Posterior cingulate gyrus (tissue), 11 donors: ENCODE measurements at regions of chr4 and their contacts with region 1.

Region 1: GRCh38 chr4:81351654-81352445 is 119.9 kb downstream of the RASGEF1B start:
- DNase-seq: peak; percentile 59 to 94 (median 78)

Region 2: DNA sequence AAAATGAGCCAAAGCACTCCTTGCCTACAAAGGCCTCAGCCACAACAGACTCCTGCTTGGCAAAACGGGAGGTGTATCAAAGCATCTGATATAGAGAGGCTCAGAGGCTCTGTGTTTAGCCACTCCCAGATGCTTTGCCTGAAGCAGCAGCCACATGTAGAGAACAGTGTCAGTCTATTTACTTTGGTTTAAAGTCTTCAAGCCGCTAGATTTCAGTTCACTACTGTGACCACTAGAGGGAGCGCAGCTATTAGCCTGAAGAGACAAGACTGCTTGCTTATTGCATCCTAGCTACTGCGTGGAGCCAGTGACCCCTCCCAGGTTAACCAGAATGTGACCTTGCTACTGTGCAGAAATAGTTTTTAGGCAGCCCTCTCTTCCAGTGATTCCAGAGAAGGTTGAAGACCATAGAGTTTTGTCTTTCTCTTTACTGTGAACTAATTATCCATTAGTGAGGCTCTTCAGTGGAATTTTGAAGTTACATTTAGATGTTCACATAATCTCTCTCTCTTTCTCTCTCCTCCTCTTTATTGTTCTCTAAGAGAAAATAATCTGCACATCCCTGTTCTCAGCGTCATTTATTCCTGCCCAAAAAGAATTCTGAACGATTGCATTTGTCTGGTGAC is 282.0 kb before region 1 on chr4:
- intact Hi-C with region 1: loop called (anchors 1 kb)
- DNase-seq: peak in 8 of 10 donors; percentile 11 to 84 (median 54)

Region 3: GRCh38 chr4:81491943-81492342 is 140.1 kb after region 1 on chr4:
- intact Hi-C with region 1: no loop called
- DNase-seq: no peak